Right ventricle myocardium superior (tissue), 1 donor: ENCODE measurements at regions of chr11 and their contacts with region 1.

Region 1: GRCh38 chr11:112784323-112785073 is 176.7 kb upstream of the NCAM1 start:
- DNase-seq: peak; percentile 89
- ATAC-seq: peak; percentile 78

Region 2: DNA sequence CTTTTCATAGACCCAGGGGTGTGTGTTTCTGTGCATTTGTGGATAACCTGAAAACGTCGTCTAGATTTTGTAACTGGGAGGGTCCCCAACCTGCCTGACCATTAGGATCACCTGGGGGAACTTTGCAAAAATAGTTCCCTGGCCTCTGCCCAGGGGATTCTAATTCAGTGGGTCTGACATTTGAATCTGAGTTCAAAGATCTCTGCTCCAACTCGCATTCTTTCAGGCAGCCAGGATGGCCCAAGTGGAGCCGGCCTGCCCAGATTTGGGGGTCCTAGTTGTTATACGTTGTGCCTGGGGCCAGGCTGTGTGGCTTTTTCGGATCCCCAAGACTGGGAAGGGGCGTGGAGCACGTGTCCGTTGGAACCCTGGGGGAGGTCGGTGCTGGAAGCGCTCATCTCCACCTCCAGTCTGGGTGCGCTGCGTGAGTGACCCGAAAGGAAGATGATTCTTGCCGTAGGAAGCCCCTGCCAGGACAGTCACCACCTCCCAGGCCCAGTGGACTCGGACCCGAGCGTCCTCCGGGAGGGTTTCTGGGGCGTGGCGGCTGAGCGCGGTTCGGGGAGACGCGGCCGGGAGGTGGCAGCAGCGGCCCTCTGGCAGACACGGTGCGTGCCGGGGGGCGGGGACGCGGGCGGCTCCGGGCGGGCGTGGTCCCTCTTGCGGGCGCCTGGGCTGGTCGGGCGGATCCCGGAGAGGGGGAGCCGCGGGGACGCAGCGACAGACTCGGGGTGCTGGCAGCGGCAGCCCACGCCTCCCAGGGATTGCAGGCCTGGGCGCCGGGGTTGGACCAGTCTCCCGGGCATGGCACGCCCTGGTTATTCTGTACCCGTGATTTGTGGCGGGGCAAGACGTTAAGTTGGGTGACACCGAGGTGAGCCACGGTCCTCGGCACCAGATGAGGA is 494.7 kb before region 1 on chr11:
- intact Hi-C with region 1: loop called (anchors 10 kb)
- DNase-seq: peak; percentile 92
- ATAC-seq: peak; percentile 92

Region 3: DNA sequence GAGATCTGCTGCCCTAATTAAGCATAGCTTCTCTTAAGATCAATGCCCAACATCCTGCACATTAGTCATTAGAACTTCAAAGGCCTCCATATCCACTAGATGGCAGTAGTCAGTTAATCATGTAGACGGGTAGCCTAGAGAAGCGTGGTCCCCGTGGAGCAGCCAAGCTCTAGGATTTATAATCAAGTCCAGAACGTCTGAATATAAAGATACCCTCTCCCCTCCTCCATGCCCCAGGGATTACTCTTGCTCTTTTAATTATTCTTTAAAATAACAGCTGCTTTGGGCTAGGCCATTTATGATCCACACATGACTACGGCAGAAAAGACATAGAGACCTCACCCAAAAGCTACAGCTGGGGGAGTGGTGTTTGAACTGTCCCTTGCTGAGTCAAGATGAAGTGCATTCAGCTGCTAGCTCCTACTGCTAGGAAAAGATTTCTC is 196.2 kb before region 1 on chr11:
- intact Hi-C with region 1: loop called (anchors 10 kb)
- DNase-seq: peak; percentile 72
- ATAC-seq: peak; percentile 94

Region 4: GRCh38 chr11:112670806-112671570 is 113.5 kb before region 1 on chr11:
- intact Hi-C with region 1: no loop called
- DNase-seq: no peak
- ATAC-seq: no peak

Region 5: DNA sequence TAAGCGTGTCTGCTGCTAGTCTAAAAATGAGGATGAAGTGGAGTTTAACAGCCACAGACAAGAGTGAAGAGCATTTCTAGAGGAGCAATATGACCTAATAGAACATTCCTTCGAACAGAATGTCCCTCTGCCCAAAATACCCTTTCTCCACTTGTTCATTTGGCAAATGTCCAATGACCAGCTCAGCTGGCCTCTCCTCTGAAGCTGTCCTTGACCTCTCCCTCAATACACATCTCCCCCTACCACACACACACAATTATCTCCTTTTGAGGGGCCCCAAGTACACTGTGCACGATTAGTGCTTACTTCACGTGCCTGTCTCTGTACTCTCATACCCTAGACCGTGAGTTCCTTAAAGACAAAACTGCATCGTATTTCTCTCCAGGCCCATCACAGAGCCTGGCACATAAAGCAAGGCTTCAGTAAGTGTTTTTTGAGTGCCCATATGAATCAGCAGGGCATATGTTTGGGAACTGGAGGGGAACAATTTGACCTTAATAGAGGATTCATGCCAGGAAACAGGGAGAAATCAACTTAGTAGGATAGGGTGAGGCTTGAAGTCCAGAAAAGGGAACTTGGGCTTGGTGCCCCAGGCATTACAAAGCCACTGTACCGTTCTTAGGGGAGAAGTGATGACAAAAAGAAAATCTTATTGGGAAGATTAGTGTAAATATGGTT is 158.6 kb after region 1 on chr11:
- intact Hi-C with region 1: no loop called
- DNase-seq: no peak
- ATAC-seq: peak; percentile 88